CD4-positive, alpha-beta memory T cell (primary cell): ENCODE measurements at regions of chr6 and their contacts with region 1.

Region 1: DNA sequence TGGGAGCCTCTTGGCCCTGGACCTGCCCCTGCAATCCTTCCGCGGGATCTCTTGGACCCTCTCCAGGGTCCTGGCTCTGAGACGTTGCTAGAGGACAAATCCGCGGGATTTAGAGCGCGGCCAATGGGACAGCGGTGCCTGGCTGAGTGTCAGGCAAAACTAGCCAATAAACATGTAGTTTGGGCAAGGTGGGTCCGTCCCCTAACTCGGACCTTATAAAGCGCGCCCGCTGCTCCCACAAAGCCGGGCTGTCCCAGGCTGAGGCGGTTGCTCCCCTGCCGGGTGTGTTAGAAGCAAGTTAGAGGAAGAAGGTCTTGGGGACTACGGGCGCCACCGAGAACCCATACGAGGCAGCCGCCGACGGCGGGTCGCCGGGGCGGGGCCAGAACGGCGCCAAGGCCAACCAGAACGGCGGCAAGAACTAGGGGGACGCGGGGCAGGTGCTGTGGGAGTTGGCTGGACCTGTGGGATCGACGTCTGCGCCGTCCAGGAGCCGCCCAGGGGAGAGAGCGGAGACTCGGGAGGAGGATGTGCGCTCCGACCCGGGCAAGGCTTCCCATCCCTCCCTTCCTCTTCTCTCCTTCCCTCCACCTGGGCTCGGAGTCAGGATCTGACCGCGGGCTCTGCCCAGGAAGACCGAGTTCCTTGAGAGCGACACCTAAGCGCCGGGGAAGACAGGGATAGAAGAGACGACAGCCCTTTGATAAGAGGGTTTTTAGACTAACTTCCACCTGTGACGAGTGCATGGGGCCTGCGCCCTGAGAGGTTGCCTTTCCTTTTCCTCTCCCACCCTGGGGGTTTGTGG is 6.5 kb upstream of the TMEM14A start:
- DNase-seq: peak; percentile 37 to 56 (median 44)
- H3K4me3 ChIP-seq: peak overlapping the region; percentile 48 to 66
- H3K4me3 Mint-ChIP-seq: no peak overlapping the region
- H3K27ac ChIP-seq: peak overlapping the region; percentile 2
- H3K27ac Mint-ChIP-seq: no peak overlapping the region
- H3K4me1 ChIP-seq: peaks cover 13% of the 10 kb centered on the region
- H3K4me1 Mint-ChIP-seq: peaks cover 0 to 1% (median 0%) of the 10 kb centered on the region in 4 donors
- H3K27me3 ChIP-seq: no peaks in the 10 kb centered on the region
- H3K27me3 Mint-ChIP-seq: peaks cover 1 to 2% of the 10 kb centered on the region in 2 donors

Region 2: DNA sequence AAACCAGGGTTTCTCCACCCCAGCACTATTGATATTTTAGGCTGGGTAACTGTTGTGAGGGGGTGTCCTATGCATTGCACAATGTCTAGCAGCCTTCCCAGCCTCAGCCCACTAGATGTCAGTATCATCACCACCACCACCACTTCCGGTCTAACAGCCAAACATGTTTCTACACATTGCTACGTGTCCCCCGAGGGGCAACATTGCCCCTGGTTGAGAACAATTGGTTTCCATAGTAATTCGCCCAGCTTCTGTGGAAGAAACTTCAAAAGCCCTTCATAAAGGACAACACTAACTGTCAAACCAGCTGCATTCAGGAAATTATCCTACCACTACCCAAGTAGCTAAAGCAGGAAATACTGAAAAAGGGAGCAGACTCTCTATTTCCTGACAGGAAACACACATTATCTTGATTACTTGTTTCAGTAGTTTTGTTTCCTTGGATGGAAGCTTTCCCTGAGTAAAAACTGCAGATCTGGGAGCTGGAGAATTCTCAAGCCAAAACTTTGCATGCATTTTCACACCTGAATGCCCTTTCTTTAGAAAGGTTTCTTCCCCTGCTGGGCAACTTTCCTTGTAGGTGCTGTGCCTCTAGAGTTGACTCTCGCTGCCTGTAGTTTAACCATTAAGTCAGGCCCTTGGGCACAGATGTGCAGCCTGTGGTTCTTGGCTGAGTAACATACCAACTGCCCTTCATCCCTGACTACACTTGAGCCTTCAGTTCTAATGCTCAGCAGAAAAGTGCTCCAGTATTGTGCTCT is 600.6 kb before region 1 on chr6:
- CTCF ChIA-PET with region 1: interaction called, 3 read pairs
- POLR2A ChIA-PET with region 1: no interaction called
- intact Hi-C with region 1: loop called (anchors 1 kb)
- DNase-seq: peak; percentile 59 to 68 (median 60)
- H3K4me3 ChIP-seq: peak overlapping the region in 1 of 2 donors; percentile 36
- H3K4me3 Mint-ChIP-seq: peak overlapping the region; percentile 80 to 92 (median 86)
- H3K27ac ChIP-seq: no peak overlapping the region
- H3K27ac Mint-ChIP-seq: peak overlapping the region; percentile 30 to 96 (median 80)
- H3K4me1 ChIP-seq: peaks cover 14% of the 10 kb centered on the region
- H3K4me1 Mint-ChIP-seq: peaks cover 11 to 14% (median 12%) of the 10 kb centered on the region in 4 donors
- H3K27me3 ChIP-seq: no peaks in the 10 kb centered on the region
- H3K27me3 Mint-ChIP-seq: peaks cover 0 to 2% of the 10 kb centered on the region in 2 donors

Region 3: GRCh38 chr6:52162940-52163908 is 501.2 kb before region 1 on chr6:
- CTCF ChIA-PET with region 1: interaction called, 4 read pairs
- POLR2A ChIA-PET with region 1: no interaction called
- intact Hi-C with region 1: loop called (anchors 1 kb)
- DNase-seq: peak in 4 of 5 donors; percentile 22 to 33 (median 28)
- H3K4me3 ChIP-seq: no peak overlapping the region
- H3K4me3 Mint-ChIP-seq: no peak overlapping the region
- H3K27ac ChIP-seq: no peak overlapping the region
- H3K27ac Mint-ChIP-seq: no peak overlapping the region
- H3K4me1 ChIP-seq: no peaks in the 10 kb centered on the region
- H3K4me1 Mint-ChIP-seq: no peaks in the 10 kb centered on the region
- H3K27me3 ChIP-seq: no peaks in the 10 kb centered on the region
- H3K27me3 Mint-ChIP-seq: peaks cover under 1 to 13% of the 10 kb centered on the region in 2 donors

Region 4: GRCh38 chr6:52407467-52407866 is 256.9 kb before region 1 on chr6:
- CTCF ChIA-PET with region 1: interaction called, 11 read pairs
- POLR2A ChIA-PET with region 1: no interaction called
- intact Hi-C with region 1: loop called (anchors 2 kb)
- DNase-seq: peak in 3 of 5 donors; percentile 35 to 43 (median 37)
- H3K4me3 ChIP-seq: no peak overlapping the region
- H3K4me3 Mint-ChIP-seq: peak overlapping the region in 1 of 8 donors; percentile 13
- H3K27ac ChIP-seq: no peak overlapping the region
- H3K27ac Mint-ChIP-seq: peak overlapping the region in 6 of 7 donors; percentile 18 to 88 (median 62)
- H3K4me1 ChIP-seq: no peaks in the 10 kb centered on the region
- H3K4me1 Mint-ChIP-seq: peaks cover 0 to 22% (median 11%) of the 10 kb centered on the region in 4 donors
- H3K27me3 ChIP-seq: no peaks in the 10 kb centered on the region
- H3K27me3 Mint-ChIP-seq: no peaks in the 10 kb centered on the region

Region 5: GRCh38 chr6:52566853-52567279 is 97.5 kb before region 1 on chr6:
- CTCF ChIA-PET with region 1: no interaction called
- POLR2A ChIA-PET with region 1: no interaction called
- intact Hi-C with region 1: no loop called
- DNase-seq: no peak
- H3K4me3 ChIP-seq: no peak overlapping the region
- H3K4me3 Mint-ChIP-seq: peak overlapping the region in 1 of 8 donors; percentile 16
- H3K27ac ChIP-seq: no peak overlapping the region
- H3K27ac Mint-ChIP-seq: peak overlapping the region in 3 of 7 donors; percentile 19 to 48 (median 42)
- H3K4me1 ChIP-seq: peaks cover 12% of the 10 kb centered on the region
- H3K4me1 Mint-ChIP-seq: peaks cover 26 to 71% (median 53%) of the 10 kb centered on the region in 4 donors
- H3K27me3 ChIP-seq: no peaks in the 10 kb centered on the region
- H3K27me3 Mint-ChIP-seq: no peaks in the 10 kb centered on the region

Region 6: GRCh38 chr6:52640170-52640569 is 24.2 kb before region 1 on chr6:
- CTCF ChIA-PET with region 1: interaction called, 11 read pairs
- POLR2A ChIA-PET with region 1: no interaction called
- intact Hi-C with region 1: no loop called
- DNase-seq: no peak
- H3K4me3 ChIP-seq: no peak overlapping the region
- H3K4me3 Mint-ChIP-seq: no peak overlapping the region
- H3K27ac ChIP-seq: no peak overlapping the region
- H3K27ac Mint-ChIP-seq: no peak overlapping the region
- H3K4me1 ChIP-seq: no peaks in the 10 kb centered on the region
- H3K4me1 Mint-ChIP-seq: peaks cover 4 to 9% (median 6%) of the 10 kb centered on the region in 4 donors
- H3K27me3 ChIP-seq: no peaks in the 10 kb centered on the region
- H3K27me3 Mint-ChIP-seq: peaks cover 13 to 14% of the 10 kb centered on the region in 2 donors

Region 7: DNA sequence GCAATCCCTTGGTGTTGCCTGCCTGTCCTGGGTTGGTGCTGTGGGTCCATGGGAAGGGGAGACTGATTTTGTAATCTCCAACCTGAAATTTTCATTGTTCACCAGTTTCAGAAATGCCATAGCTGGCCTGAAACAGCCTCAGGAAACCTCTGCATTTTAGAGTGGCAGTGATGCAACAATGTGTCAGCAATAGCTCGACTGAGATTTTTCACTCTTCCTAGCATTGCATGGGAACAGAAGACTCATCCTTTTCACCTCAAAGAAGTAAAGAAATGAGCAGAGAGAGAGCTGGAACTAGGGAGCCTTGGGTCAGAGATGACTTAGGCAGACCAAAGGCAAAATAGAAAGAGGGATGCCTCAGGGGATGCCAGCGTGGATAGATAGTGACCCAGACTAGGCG is 17.2 kb before region 1 on chr6:
- CTCF ChIA-PET with region 1: interaction called, 106 read pairs
- POLR2A ChIA-PET with region 1: no interaction called
- intact Hi-C with region 1: loop called (anchors 1 kb)
- DNase-seq: no peak
- H3K4me3 ChIP-seq: no peak overlapping the region
- H3K4me3 Mint-ChIP-seq: no peak overlapping the region
- H3K27ac ChIP-seq: no peak overlapping the region
- H3K27ac Mint-ChIP-seq: no peak overlapping the region
- H3K4me1 ChIP-seq: no peaks in the 10 kb centered on the region
- H3K4me1 Mint-ChIP-seq: peaks cover 3 to 7% (median 4%) of the 10 kb centered on the region in 4 donors
- H3K27me3 ChIP-seq: peaks cover 6% of the 10 kb centered on the region
- H3K27me3 Mint-ChIP-seq: peaks cover 6 to 10% of the 10 kb centered on the region in 2 donors

Region 8: GRCh38 chr6:53273370-53273769 is 609.0 kb after region 1 on chr6:
- CTCF ChIA-PET with region 1: no interaction called
- POLR2A ChIA-PET with region 1: no interaction called
- intact Hi-C with region 1: no loop called
- DNase-seq: no peak
- H3K4me3 ChIP-seq: no peak overlapping the region
- H3K4me3 Mint-ChIP-seq: no peak overlapping the region
- H3K27ac ChIP-seq: no peak overlapping the region
- H3K27ac Mint-ChIP-seq: peak overlapping the region in 5 of 7 donors; percentile 5 to 77 (median 37)
- H3K4me1 ChIP-seq: no peaks in the 10 kb centered on the region
- H3K4me1 Mint-ChIP-seq: peaks cover 4 to 15% (median 7%) of the 10 kb centered on the region in 4 donors
- H3K27me3 ChIP-seq: no peaks in the 10 kb centered on the region
- H3K27me3 Mint-ChIP-seq: no peaks in the 10 kb centered on the region